ENCODE measurements at regions of chr1 and their contacts with region 1.

Region 1: GRCh38 chr1:234409328-234409727 is 36.1 kb downstream of the COA6 start:
- DNase-seq: peak; percentile 28
- H3K4me3 Mint-ChIP-seq: peak overlapping the region; percentile 60
- H3K27ac Mint-ChIP-seq: peak overlapping the region; percentile 84
- H3K4me1 Mint-ChIP-seq: peaks cover 22% of the 10 kb centered on the region
- H3K27me3 Mint-ChIP-seq: no peaks in the 10 kb centered on the region

Region 2: DNA sequence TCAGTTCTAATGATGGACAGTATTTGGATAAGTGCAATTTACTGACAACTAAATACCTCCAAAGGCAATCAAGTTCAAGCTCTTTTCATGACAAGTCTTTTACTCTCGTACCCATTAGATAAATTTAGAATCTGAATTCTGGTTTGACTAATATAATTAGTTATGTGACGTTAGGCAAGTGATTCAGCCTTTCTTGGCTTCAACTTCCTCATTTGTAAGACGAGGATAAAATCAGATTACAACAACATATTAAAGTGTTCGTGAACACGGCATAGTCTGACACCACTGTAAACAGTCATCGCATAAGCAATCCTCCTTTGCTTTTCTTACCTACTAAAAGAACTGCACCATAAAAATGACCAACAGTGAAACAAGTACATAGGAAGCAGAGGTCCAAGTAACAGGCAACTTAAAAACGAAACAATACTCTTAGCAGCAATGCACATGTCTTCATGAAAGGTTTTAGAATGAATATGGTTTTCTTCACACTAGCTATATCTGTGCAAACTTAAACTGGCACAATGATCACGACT is 10.4 kb before region 1 on chr1:
- CTCF ChIA-PET with region 1: interaction called, 3 read pairs
- POLR2A ChIA-PET with region 1: interaction called, 10 read pairs
- DNase-seq: no peak
- H3K4me3 Mint-ChIP-seq: peak overlapping the region; percentile 72
- H3K27ac Mint-ChIP-seq: peak overlapping the region; percentile 83
- H3K4me1 Mint-ChIP-seq: peaks cover 51% of the 10 kb centered on the region
- H3K27me3 Mint-ChIP-seq: no peaks in the 10 kb centered on the region